IMR-90 (cell line): ENCODE measurements at regions of chr19 and their contacts with region 1.

Region 1: DNA sequence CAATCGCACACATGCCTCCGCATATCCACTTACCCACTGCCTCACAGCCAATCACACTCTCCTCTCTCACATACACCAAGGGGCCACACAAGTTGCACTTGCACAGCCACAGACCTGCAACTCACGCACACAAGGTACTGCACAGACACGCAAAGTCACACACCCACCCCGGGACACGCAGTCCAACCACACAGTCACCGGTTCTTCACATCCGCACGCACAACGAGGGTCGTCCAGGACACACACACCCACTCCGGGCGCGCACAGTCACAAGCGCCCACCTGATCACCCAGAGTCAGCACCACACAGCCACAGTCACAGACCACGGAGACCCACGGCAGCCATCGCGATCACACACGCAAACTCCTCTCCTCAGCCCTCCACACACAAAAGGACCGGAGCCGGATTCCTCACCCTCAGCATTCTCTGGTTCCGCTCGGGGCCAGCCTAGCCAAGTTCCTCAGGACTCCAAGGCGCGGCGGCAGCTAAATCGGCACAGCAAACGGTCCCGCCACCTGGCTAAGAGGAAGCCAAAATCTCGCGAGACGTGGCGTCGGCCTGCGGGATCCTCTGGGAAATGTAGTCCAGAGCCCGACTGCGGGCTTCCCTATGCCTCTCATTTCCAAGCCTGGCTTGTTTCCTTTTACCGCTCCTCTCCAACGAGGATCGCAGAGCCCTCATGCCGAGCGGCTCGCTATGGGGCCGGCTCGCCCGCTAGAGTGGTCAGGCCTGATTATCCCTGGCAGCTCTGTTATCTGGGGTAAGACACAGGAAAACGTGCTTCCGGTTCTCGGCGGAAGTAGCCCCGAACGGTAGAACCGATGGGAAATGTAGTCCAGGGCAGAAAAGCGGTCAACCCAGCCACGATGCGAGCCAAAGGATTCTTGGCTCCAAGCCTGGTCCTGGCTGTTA is at the start of gene ZNF850:
- DNase-seq: peak; percentile 92
- ATAC-seq: peak; percentile 95
- H3K4me3 ChIP-seq: peak within 1 kb of the TSS; percentile 69
- H3K27ac ChIP-seq: peak within 1 kb of the TSS; percentile 83
- H3K4me1 ChIP-seq: no peaks in the 10 kb centered on the region
- H3K27me3 ChIP-seq: no peaks in the 10 kb centered on the region
- CTCF ChIP-seq: no peak
- POLR2A ChIP-seq: no peak
- RAD21 ChIP-seq: no peak
- total RNA-seq, gene ZNF850: 7.2 and 8.3 TPM in 2 replicates

Region 2: DNA sequence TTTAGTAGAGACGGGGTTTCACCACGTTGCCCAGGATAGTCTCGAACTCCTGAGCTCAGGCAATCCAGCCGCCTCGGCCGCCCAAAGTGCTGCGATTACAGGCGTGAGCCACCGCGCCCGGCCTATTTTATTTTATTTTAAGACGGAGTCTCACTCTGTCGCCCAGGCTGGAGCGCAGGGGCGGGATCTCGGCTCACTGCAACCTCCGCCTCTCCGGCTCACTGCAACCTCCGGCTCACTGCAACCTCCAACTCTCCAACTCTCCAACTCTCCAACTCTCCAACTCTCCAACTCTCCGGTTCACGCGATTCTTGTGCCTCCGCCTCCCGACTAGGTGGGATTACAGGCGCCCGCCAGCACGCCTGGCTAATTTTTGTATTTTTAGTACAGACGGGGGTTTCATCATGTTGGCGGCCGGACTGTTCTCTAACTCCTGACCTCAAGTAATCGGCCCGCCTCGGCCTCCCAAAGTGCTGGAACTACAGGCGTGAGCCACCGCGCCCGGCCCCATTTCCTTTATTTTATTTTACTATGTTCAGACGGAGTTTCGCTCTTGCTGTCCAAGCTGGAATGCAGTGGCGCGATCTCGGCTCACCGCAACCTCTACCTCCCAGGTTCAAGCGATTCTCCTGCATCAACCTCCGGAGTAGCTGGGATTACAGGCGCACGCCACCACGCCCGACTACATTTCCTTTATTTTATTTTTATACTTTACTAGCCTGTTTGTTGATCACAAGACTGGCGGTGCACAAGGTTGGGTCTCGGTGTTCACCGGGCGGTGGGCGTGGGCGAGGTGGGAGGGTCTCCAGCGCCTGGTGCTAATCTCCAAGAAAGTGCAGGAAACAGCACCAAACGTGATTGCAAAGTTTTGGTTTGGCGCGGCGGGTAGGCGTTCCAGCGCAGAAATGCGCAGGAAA is 23.8 kb after region 1 on chr19:
- CTCF ChIA-PET with region 1: no interaction called
- POLR2A ChIA-PET with region 1: interaction called, 6 read pairs
- dilution Hi-C with region 1: no loop called
- in situ Hi-C with region 1: no loop called
- intact Hi-C with region 1: loop called (anchors 2 kb)
- DNase-seq: no peak
- ATAC-seq: no peak
- H3K4me3 ChIP-seq: peak overlapping the region; percentile 97
- H3K27ac ChIP-seq: peak overlapping the region; percentile 5; the same call in 1 of the 2 replicates
- H3K4me1 ChIP-seq: no peaks in the 10 kb centered on the region
- H3K27me3 ChIP-seq: no peaks in the 10 kb centered on the region
- CTCF ChIP-seq: no peak
- POLR2A ChIP-seq: no peak
- RAD21 ChIP-seq: no peak

Region 3: DNA sequence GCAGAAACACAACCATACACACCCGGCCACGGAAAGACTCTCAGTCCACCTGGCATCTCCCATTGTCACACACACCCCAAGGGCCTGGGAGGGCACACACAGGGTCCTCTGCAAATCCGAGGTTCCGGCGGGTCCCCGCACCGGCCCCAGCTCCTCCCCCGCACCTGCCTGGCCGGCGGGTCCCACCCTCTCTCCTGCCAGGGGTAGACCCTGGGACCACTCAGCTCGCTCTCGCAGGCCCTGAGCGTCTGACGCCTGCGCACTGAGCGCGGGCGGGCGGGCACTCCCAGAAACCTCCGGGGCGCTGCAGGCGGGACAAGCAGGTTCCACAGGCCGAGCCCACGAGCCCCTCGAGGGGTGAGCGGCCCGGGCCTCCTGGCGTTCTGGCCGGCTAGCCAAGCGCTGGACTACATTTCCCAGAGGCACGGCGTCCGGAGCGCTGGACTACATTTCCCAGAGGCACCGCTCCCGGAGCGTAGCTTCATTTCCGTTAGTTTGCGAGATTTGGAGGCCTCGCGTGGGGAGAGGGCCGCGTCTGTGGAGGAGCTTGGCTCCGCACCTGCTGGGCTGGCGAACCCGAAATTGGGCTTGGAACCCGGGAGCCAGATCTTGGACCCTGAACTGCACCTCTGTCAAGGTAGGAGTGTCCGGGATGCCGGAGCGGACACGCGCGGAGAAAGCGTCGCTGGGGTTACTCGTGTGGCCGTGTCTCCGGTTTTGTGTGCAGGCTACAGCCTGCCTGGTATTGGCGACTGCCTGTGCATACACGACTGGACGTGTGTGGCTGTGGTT is 305.6 kb after region 1 on chr19 and contains the start of gene ZNF420:
- CTCF ChIA-PET with region 1: no interaction called
- POLR2A ChIA-PET with region 1: no interaction called
- dilution Hi-C with region 1: no loop called
- in situ Hi-C with region 1: no loop called
- intact Hi-C with region 1: loop called (anchors 10 kb)
- DNase-seq: peak; percentile 95
- ATAC-seq: peak; percentile 98
- H3K4me3 ChIP-seq: peak within 1 kb of the TSS; percentile 93
- H3K27ac ChIP-seq: peak within 1 kb of the TSS; percentile 56
- H3K4me1 ChIP-seq: no peaks in the 10 kb centered on the region
- H3K27me3 ChIP-seq: no peaks in the 10 kb centered on the region
- CTCF ChIP-seq: 0 out of 2 replicates have a peak, but pooled peaks have one; percentile 4
- POLR2A ChIP-seq: no peak
- RAD21 ChIP-seq: no peak
- total RNA-seq, gene ZNF420: 11.7 and 14.2 TPM in 2 replicates